Prostate gland (tissue), 2 donors: ENCODE measurements at regions of chr7 and their contacts with region 1.

Region 1: DNA sequence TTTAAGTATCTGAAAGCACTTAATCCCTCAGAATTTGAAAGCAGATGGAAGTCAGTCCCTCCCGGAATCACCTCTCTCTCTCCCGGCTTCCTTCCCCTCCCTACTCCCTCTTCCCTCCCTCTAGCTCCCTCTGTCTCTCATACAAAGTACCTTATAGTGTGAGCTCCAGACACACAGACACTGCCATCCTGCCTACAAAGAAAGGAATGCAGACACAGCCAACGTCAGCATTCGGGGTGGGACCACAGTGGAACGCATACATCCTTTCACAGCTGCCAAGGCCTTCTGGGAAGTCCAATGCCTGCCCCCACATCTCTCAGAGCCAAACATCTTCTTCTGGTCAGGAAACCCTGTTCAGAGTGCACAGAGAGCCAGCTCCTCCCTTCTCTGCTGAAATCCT is 9.3 kb downstream of the NOD1 start:
- DNase-seq: no peak
- H3K4me3 ChIP-seq: no peak overlapping the region
- H3K27ac ChIP-seq: peak overlapping the region; percentile 33 to 59
- H3K4me1 ChIP-seq: peaks cover 5% of the 10 kb centered on the region
- H3K27me3 ChIP-seq: no peaks in the 10 kb centered on the region
- CTCF ChIP-seq: peak in 2 of 4 experiments; percentile 22 to 28
- POLR2A ChIP-seq: no peak

Region 2: GRCh38 chr7:30322271-30323005 is 146.9 kb before region 1 on chr7:
- intact Hi-C with region 1: no loop called
- DNase-seq: peak; percentile 16
- H3K4me3 ChIP-seq: no peak overlapping the region
- H3K27ac ChIP-seq: peak overlapping the region; percentile 34 to 71
- H3K4me1 ChIP-seq: peaks cover 4% of the 10 kb centered on the region
- H3K27me3 ChIP-seq: no peaks in the 10 kb centered on the region
- CTCF ChIP-seq: no peak
- POLR2A ChIP-seq: no peak

Region 3: GRCh38 chr7:30433082-30433481 is 36.2 kb before region 1 on chr7:
- intact Hi-C with region 1: loop called (anchors 5 kb)
- DNase-seq: peak; percentile 62
- H3K4me3 ChIP-seq: no peak overlapping the region
- H3K27ac ChIP-seq: peak overlapping the region in 1 of 2 donors; percentile 60
- H3K4me1 ChIP-seq: no peaks in the 10 kb centered on the region
- H3K27me3 ChIP-seq: no peaks in the 10 kb centered on the region
- CTCF ChIP-seq: no peak
- POLR2A ChIP-seq: no peak